Activated CD8-positive, alpha-beta T cell treated with anti-CD3 and anti-CD28 coated beads for 36 hours (primary cell): ENCODE measurements at regions of chr19 and their contacts with region 1.

Region 1: GRCh38 chr19:4267101-4267900 is 11.8 kb upstream of the SHD start:
- DNase-seq: peak; percentile 79
- ATAC-seq: peak; percentile 71
- H3K4me3 Mint-ChIP-seq: no peak overlapping the region
- H3K27ac Mint-ChIP-seq: peak overlapping the region; percentile 4
- H3K4me1 Mint-ChIP-seq: peaks cover 19% of the 10 kb centered on the region
- H3K27me3 Mint-ChIP-seq: no peaks in the 10 kb centered on the region
- CTCF ChIP-seq: peak; percentile 81

Region 2: GRCh38 chr19:4295972-4296771 is 28.9 kb after region 1 on chr19:
- CTCF ChIA-PET with region 1: interaction called, 24 read pairs
- POLR2A ChIA-PET with region 1: interaction called, 4 read pairs
- intact Hi-C with region 1: no loop called
- DNase-seq: no peak
- ATAC-seq: no peak
- H3K4me3 Mint-ChIP-seq: no peak overlapping the region
- H3K27ac Mint-ChIP-seq: peak overlapping the region; percentile 16
- H3K4me1 Mint-ChIP-seq: peaks cover 17% of the 10 kb centered on the region
- H3K27me3 Mint-ChIP-seq: no peaks in the 10 kb centered on the region
- CTCF ChIP-seq: no peak

Region 3: DNA sequence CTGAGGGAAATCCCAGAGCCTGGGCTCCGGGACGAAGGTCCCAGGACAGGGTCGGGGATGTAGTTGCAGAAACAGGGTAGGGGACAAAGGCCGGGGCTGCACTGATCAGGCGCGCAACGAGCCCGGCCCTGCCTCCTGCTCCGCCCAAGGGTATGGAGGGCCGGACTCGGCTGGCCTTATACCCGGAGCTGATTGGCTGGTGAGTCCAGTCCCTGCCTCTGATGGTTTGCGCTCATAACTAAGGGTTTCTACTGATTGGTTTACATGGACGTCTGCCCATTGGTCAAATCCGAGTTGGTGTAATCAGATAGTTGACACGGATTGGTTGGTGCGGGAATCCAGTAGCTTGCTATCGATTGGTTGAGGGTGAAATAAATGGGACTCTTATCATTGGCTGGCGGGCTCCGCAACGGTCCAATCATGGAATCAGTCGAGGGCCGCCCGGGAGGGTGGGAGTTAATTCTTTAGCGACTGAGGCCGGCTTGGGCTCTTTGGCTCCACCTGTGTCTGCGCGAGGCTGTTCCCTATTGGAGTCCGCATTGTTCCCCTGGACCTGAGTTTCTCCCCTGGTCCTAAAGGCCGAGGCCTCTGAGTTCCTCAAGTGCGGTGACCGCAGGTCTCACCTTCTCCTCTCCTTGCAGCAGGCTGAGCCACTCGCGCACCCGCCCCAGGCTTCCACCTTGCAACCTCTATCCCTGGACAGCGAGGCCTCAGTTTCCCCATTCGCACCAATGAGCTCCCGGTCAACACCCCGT is 75.5 kb after region 1 on chr19:
- CTCF ChIA-PET with region 1: interaction called, 33 read pairs
- POLR2A ChIA-PET with region 1: interaction called, 8 read pairs
- intact Hi-C with region 1: no loop called
- DNase-seq: peak; percentile 98
- ATAC-seq: peak; percentile 91
- H3K4me3 Mint-ChIP-seq: peak overlapping the region; percentile 93
- H3K27ac Mint-ChIP-seq: peak overlapping the region; percentile 94
- H3K4me1 Mint-ChIP-seq: peaks cover 22% of the 10 kb centered on the region
- H3K27me3 Mint-ChIP-seq: no peaks in the 10 kb centered on the region
- CTCF ChIP-seq: peak; percentile 27

Region 4: GRCh38 chr19:4400135-4400936 is 133.0 kb after region 1 on chr19 and contains the start of gene SH3GL1:
- CTCF ChIA-PET with region 1: interaction called, 10 read pairs
- POLR2A ChIA-PET with region 1: no interaction called
- intact Hi-C with region 1: no loop called
- DNase-seq: peak; percentile 93
- ATAC-seq: peak; percentile 71
- H3K4me3 Mint-ChIP-seq: peak within 1 kb of the TSS; percentile 95
- H3K27ac Mint-ChIP-seq: peak within 1 kb of the TSS; percentile 97
- H3K4me1 Mint-ChIP-seq: peaks cover 52% of the 10 kb centered on the region
- H3K27me3 Mint-ChIP-seq: no peaks in the 10 kb centered on the region
- CTCF ChIP-seq: peak; percentile 89
- total RNA-seq, gene SH3GL1: 53.1 to 59.2 TPM